H1 (cell line): ENCODE measurements at regions of chr11 and their contacts with region 1.

Region 1: DNA sequence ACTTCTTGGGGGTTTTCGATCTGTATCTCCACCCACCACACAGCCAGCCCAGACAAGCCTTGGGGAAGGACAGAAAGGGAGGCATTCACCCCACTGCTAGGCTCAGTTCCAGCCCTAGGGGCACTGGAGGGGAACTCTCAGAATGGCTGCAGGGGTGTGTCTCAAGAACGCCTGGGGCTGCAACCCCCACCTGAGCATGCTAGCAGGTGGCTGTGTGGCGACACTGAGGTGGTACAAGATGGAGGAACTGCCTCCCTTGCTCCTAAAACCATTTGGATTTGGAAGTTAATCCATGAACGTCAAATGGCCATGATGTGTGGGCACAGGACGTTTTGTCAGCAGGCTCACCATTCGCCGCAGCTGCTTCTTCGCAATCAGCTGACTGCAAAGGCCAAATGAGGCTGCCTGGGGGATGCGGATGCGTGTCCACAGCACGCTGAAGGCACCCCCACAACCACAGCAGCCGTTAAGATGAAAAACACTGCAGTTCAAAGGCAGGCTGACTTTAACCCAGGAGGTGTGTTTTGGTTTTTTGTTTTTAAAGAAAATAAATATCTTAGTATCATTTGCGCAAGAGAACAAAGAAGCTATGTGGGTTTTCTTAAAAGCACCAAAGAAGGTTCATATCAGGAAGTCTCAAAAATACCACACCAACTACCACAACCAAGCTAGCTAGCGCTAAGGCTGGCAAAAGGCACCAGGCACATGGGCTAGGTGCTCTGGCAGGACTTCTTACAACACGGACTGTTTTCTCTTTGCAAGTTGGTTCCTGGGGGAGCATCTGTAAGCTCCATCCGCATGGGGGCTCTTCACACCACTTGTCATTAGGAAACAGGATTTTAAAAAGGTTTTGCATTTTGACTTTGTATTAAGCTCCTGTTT is 22.2 kb upstream of the NAP1L4 start:
- DNase-seq: no peak
- H3K4me3 ChIP-seq: no peak overlapping the region
- H3K27ac ChIP-seq: no peak overlapping the region
- H3K4me1 ChIP-seq: no peaks in the 10 kb centered on the region
- H3K27me3 ChIP-seq: no peaks in the 10 kb centered on the region
- CTCF ChIP-seq: no peak
- EP300 ChIP-seq: no peak
- POLR2A ChIP-seq: no peak
- RAD21 ChIP-seq: no peak

Region 2: DNA sequence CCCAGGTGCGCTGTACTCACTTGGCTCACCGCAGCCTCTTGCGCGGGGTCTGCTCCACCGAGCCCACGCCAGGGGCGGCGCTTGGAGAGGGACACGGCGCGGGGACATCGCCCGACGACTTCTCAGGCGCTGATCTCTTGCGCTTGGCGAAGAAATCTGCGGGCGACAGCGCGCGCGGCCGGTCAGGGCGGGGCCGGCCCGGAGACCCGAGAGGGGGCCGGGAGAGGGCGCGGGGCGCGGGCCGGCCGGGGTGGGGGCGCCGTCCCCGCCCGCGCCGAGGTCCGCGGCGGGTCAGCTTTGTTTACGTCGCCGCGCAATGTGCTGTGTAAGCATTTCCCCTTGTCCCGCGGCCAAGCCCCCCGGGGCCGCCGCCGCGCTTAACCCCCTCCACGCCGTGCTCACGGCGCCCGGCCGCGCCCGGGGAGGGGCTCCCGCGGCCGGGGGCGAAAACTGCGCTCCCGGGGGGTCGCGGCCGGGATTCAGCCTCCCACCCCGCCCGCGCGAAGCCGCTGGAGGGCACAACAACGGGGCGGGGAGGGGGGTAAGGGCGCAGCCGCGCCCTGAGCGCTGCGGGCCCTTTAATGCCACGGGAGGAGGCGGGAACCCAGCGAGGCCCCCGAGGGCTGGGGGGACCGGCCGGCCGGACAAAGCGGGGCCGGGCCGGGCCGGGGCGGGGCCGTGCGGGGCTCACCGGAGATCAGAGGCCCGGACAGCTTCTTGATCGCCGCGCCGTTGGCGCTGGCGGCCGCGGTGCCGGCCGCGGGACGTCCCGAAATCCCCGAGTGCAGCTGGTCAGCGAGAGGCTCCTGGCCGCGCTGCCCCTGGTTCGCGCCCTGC is 130.1 kb before region 1 on chr11:
- CTCF ChIA-PET with region 1: no interaction called
- POLR2A ChIA-PET with region 1: no interaction called
- DNase-seq: no peak
- H3K4me3 ChIP-seq: peak overlapping the region; percentile 52 to 75 (median 56)
- H3K27ac ChIP-seq: no peak overlapping the region
- H3K4me1 ChIP-seq: peaks cover 0 to 25% (median 21%) of the 10 kb centered on the region in 4 experiments; a peak in 6 of 7 replicates
- H3K27me3 ChIP-seq: peaks cover 2 to 80% (median 55%) of the 10 kb centered on the region in 4 experiments
- CTCF ChIP-seq: no peak
- EP300 ChIP-seq: no peak
- POLR2A ChIP-seq: no peak
- RAD21 ChIP-seq: no peak

Region 3: DNA sequence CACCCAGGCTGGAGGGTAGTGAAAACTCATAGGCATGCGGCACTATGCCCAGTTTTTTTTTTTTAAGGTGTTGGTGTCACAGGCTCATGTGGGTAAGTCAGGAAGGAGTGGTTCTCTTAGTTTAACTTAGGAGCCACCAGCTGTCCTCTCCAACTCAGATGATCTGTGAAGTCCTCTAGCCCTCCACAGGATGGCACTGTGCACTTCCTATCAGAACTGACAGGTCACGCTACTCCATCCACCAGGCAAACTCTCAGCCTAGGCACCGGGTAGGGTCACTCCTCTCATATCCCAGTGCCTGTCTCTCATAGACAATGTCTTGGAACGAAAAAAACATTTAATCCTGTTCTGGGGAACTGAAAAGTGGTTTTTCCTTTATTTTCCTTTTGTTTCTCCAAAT is 38.7 kb before region 1 on chr11:
- CTCF ChIA-PET with region 1: interaction called, 13 read pairs
- POLR2A ChIA-PET with region 1: interaction called, 4 read pairs
- DNase-seq: no peak
- H3K4me3 ChIP-seq: no peak overlapping the region
- H3K27ac ChIP-seq: no peak overlapping the region
- H3K4me1 ChIP-seq: no peaks in the 10 kb centered on the region
- H3K27me3 ChIP-seq: no peaks in the 10 kb centered on the region
- CTCF ChIP-seq: peak; percentile 46 to 60 (median 51)
- EP300 ChIP-seq: no peak
- POLR2A ChIP-seq: no peak
- RAD21 ChIP-seq: peak; percentile 50 to 58

Region 4: DNA sequence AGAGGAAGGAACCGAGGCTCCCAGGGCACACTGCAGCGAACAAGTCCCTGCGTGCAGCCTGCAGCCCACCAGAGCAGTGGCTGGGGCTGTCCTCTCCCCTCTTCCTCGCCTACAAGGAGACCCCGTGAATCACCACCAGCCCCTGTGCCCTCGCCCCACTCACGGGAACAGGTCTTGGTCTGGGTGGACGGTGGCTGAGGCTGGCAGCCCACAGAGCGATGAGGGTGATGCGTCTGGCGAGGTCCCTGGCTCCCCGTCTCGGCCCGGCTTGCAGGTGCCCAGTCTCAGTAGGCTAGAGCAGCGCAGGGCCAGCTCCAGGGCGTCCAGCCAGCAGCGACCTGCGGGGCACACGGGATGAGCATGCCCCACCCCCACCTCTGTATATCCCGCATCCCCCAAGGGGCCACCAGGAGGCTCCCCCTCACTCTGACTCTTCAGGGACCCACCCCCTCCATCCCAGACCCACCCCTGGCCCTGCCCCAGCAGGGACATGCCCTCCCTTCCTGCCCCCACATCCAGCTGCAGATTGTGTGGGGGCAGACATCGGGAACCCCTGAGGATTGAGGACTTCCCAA is 93.4 kb after region 1 on chr11:
- CTCF ChIA-PET with region 1: no interaction called
- POLR2A ChIA-PET with region 1: no interaction called
- DNase-seq: no peak
- H3K4me3 ChIP-seq: no peak overlapping the region; a peak in 1 of 8 replicates
- H3K27ac ChIP-seq: no peak overlapping the region
- H3K4me1 ChIP-seq: peaks cover 0 to 16% (median 8%) of the 10 kb centered on the region in 4 experiments; a peak in 5 of 7 replicates
- H3K27me3 ChIP-seq: no peaks in the 10 kb centered on the region; a peak in 2 of 7 replicates
- CTCF ChIP-seq: peak; percentile 3 to 25 (median 20); a peak in 3 of 4 replicates
- EP300 ChIP-seq: no peak
- POLR2A ChIP-seq: no peak
- RAD21 ChIP-seq: no peak; a peak in 1 of 4 replicates

Region 5: GRCh38 chr11:3164979-3165814 is 150.9 kb after region 1 on chr11 and contains the start of gene OSBPL5:
- CTCF ChIA-PET with region 1: no interaction called
- POLR2A ChIA-PET with region 1: no interaction called
- DNase-seq: no peak
- H3K4me3 ChIP-seq: peak within 1 kb of the TSS; percentile 49 to 68 (median 54)
- H3K27ac ChIP-seq: no peak within 1 kb of the TSS
- H3K4me1 ChIP-seq: peaks cover 5 to 35% (median 22%) of the 10 kb centered on the region in 4 experiments
- H3K27me3 ChIP-seq: peaks cover 0 to 46% (median 21%) of the 10 kb centered on the region in 4 experiments; a peak in 6 of 7 replicates
- CTCF ChIP-seq: no peak
- EP300 ChIP-seq: no peak
- POLR2A ChIP-seq: no peak
- RAD21 ChIP-seq: no peak
- total RNA-seq, gene OSBPL5: 7.9 and 9.9 TPM in 2 replicates